Vagina (tissue), 2 donors: ENCODE measurements at regions of chr3 and their contacts with region 1.

Region 1: GRCh38 chr3:68876112-68876713 is 56.1 kb downstream of the TAFA4 start:
- DNase-seq: no peak
- H3K4me3 ChIP-seq: no peak overlapping the region
- H3K27ac ChIP-seq: no peak overlapping the region
- H3K4me1 ChIP-seq: no peaks in the 10 kb centered on the region
- H3K27me3 ChIP-seq: no peaks in the 10 kb centered on the region
- CTCF ChIP-seq: peak; percentile 50 to 81 (median 53)
- POLR2A ChIP-seq: no peak

Region 2: DNA sequence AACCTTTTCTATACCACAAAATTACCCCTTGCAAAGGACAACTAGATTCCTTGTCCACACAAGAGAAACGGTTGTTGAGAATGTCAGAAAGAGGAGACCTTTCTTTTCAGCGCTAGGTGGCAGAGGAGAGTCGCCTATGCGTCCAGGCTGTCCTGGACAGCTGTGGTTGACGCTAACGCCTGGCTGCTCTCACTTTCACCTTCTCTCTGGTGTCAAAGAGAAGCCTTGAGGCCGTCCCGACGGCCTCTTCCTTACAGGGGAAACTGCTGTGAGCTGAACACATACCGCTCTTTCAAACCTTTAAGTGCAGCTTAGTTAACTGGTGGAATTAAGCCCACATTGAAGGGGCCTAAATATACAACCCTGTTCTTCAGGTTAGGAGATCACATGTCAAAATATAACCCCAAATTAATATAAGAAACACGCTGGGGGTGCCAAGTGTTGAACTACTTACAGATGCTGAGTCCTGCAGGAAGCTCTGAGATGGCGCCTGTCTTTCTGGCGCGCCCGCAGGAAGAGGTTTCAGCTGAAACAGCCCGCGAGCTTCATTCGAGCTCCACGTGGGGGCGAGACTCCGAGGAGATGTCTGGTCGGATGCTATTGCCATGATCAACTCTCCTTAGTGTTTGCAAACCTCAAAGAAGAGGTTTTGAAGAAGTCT is 1904.2 kb before region 1 on chr3:
- intact Hi-C with region 1: loop called (anchors 10 kb)
- DNase-seq: no peak
- H3K4me3 ChIP-seq: peak overlapping the region; percentile 23 to 38
- H3K27ac ChIP-seq: no peak overlapping the region
- H3K4me1 ChIP-seq: no peaks in the 10 kb centered on the region
- H3K27me3 ChIP-seq: no peaks in the 10 kb centered on the region
- CTCF ChIP-seq: peak; percentile 7 to 91 (median 65)
- POLR2A ChIP-seq: no peak